ENCODE measurements at regions of chr14 and their contacts with region 1.

Region 1: DNA sequence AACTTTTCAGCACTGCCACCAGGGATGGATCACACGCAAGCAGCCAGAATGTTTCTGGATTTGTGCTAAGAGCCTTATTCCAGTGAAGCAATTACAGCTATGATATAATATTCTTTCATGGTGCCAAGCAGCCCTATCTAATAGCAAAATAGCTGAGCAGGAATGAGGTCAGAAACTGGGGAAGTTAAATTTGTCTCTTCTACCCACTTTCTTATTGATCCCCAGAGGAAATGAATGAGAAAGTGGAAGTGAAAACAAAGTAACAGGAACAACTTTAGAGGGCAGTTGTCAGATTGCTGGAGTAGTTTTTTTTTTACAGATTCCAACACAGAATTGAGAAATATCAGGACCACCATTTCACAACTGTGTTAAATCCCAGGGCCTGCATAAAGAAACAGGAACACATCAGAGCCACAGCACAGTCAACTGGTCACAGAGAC is 44.8 kb downstream of the GCH1 start:
- DNase-seq: no peak
- ATAC-seq: no peak
- H3K4me3 ChIP-seq: no peak overlapping the region
- H3K4me3 Mint-ChIP-seq: no peak overlapping the region
- H3K27ac ChIP-seq: no peak overlapping the region
- H3K27ac Mint-ChIP-seq: peak overlapping the region in 1 of 2 donors; percentile 39
- H3K4me1 ChIP-seq: peaks cover 0 to 4% of the 10 kb centered on the region in 2 experiments
- H3K4me1 Mint-ChIP-seq: peaks cover 20 to 31% (median 22%) of the 10 kb centered on the region in 3 donors
- H3K27me3 ChIP-seq: no peaks in the 10 kb centered on the region
- H3K27me3 Mint-ChIP-seq: no peaks in the 10 kb centered on the region

Region 2: DNA sequence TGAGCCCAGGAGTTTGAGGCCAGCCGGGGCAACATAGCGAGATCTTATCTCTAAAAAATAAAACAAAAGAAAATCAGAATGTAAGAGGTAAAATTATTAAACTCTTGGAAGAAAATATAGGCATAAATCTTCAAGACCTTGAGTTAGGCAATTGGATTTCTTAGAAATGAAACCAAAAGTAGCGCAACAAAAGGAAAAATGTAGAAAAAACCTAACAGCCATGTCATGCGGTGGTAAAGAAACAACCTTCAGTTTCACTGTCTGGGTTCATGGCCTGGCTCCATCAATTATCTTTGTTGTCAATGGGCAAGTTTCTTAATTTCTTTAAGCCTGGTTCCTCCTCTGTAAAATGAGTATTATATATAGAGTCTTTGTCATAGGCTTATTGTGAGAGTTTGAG is 50.3 kb after region 1 on chr14:
- CTCF ChIA-PET with region 1: interaction called, 3 to 10 read pairs
- POLR2A ChIA-PET with region 1: no interaction called
- DNase-seq: peak in 1 of 35 experiments; percentile 41
- ATAC-seq: peak in 1 of 4 experiments; percentile 42
- H3K4me3 ChIP-seq: no peak overlapping the region
- H3K4me3 Mint-ChIP-seq: peak overlapping the region in 2 of 3 donors; percentile 46 to 47
- H3K27ac ChIP-seq: peak overlapping the region; percentile 7
- H3K27ac Mint-ChIP-seq: peak overlapping the region; percentile 49 to 51
- H3K4me1 ChIP-seq: peaks cover 0 to 5% of the 10 kb centered on the region in 2 experiments
- H3K4me1 Mint-ChIP-seq: peaks cover 11 to 14% (median 12%) of the 10 kb centered on the region in 3 donors
- H3K27me3 ChIP-seq: no peaks in the 10 kb centered on the region
- H3K27me3 Mint-ChIP-seq: no peaks in the 10 kb centered on the region

Region 3: GRCh38 chr14:55031190-55031589 is 173.3 kb after region 1 on chr14:
- CTCF ChIA-PET with region 1: no interaction called
- POLR2A ChIA-PET with region 1: no interaction called
- DNase-seq: no peak
- ATAC-seq: no peak
- H3K4me3 ChIP-seq: no peak overlapping the region
- H3K4me3 Mint-ChIP-seq: no peak overlapping the region
- H3K27ac ChIP-seq: no peak overlapping the region
- H3K27ac Mint-ChIP-seq: no peak overlapping the region
- H3K4me1 ChIP-seq: peaks cover 7 to 20% of the 10 kb centered on the region in 2 experiments
- H3K4me1 Mint-ChIP-seq: peaks cover 38 to 49% (median 46%) of the 10 kb centered on the region in 3 donors
- H3K27me3 ChIP-seq: no peaks in the 10 kb centered on the region
- H3K27me3 Mint-ChIP-seq: no peaks in the 10 kb centered on the region

Measured in T-cell (primary cell).